OCI-LY7 (cell line): ENCODE measurements at regions of chr16 and their contacts with region 1.

Region 1: DNA sequence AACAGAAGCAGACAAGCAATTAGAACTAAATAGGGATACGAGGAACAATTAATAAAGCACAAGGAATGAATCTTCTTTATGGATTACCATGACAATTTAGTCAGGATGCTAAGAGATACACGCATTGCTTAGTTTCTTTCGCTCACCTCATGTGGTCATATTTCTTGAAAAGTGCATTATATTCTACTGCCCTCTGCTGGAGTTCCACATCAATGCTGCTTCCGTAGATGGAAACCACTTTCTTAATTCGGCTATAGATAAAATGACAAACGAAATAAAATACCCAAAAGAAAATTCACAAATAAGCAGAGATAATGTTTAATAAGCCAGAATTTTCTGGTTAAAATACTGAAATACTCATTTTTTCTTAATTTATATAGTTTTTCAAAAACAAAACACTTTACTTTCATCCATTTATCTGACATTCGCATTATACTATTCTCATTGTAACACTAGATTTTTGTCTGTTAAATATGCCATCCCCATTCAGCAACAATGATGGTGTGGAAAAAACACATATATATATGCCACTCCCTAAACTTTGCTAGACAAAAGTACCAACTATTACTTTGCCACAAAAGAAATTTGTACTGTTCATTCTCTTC is 22.0 kb upstream of the PHLPP2 start:
- DNase-seq: peak; percentile 64
- H3K4me3 ChIP-seq: no peak overlapping the region
- H3K27ac ChIP-seq: no peak overlapping the region
- H3K4me1 ChIP-seq: no peaks in the 10 kb centered on the region
- CTCF ChIP-seq: peak; percentile 96

Region 2: GRCh38 chr16:71564155-71564967 is 182.2 kb before region 1 on chr16:
- CTCF ChIA-PET with region 1: no interaction called
- POLR2A ChIA-PET with region 1: no interaction called
- intact Hi-C with region 1: loop called (anchors 2 kb)
- DNase-seq: no peak
- H3K4me3 ChIP-seq: peak overlapping the region; percentile 67
- H3K27ac ChIP-seq: peak overlapping the region; percentile 97
- H3K4me1 ChIP-seq: peaks cover 29% of the 10 kb centered on the region
- CTCF ChIP-seq: no peak

Region 3: GRCh38 chr16:71645453-71645852 is 101.1 kb before region 1 on chr16:
- CTCF ChIA-PET with region 1: no interaction called
- POLR2A ChIA-PET with region 1: no interaction called
- intact Hi-C with region 1: loop called (anchors 5 kb)
- DNase-seq: peak; percentile 52
- H3K4me3 ChIP-seq: no peak overlapping the region
- H3K27ac ChIP-seq: no peak overlapping the region
- H3K4me1 ChIP-seq: no peaks in the 10 kb centered on the region
- CTCF ChIP-seq: peak; percentile 82

Region 4: DNA sequence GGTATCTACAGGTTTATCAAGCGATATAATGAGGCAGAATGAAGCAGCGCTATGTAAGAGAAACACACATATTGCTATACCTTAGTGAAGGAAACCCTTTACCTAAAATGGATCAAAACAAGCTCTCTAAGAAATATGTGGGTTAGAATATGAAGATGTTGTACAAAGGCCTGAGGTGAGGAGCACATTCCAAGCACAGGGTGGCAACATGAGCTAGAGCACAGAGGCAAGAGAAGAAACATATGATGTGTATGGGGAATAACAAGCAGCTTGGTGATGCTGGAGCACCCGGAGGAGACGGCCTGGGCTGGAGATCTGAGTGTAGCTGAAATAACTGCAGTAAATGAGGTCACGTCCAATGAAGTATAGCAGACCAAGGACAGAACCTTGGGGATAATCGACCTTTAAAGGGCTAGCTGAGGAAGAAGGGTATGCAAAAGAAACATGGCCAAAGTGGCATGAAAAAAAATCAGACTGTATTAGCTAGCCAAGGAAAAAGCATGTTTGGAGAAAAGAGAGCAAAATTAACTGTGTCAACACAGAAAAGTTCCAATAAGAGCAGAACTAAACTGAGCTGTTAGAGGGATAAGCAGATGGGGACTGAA is 76.5 kb before region 1 on chr16:
- CTCF ChIA-PET with region 1: no interaction called
- POLR2A ChIA-PET with region 1: no interaction called
- intact Hi-C with region 1: loop called (anchors 5 kb)
- DNase-seq: no peak
- H3K4me3 ChIP-seq: no peak overlapping the region
- H3K27ac ChIP-seq: no peak overlapping the region
- H3K4me1 ChIP-seq: no peaks in the 10 kb centered on the region
- CTCF ChIP-seq: no peak

Region 5: DNA sequence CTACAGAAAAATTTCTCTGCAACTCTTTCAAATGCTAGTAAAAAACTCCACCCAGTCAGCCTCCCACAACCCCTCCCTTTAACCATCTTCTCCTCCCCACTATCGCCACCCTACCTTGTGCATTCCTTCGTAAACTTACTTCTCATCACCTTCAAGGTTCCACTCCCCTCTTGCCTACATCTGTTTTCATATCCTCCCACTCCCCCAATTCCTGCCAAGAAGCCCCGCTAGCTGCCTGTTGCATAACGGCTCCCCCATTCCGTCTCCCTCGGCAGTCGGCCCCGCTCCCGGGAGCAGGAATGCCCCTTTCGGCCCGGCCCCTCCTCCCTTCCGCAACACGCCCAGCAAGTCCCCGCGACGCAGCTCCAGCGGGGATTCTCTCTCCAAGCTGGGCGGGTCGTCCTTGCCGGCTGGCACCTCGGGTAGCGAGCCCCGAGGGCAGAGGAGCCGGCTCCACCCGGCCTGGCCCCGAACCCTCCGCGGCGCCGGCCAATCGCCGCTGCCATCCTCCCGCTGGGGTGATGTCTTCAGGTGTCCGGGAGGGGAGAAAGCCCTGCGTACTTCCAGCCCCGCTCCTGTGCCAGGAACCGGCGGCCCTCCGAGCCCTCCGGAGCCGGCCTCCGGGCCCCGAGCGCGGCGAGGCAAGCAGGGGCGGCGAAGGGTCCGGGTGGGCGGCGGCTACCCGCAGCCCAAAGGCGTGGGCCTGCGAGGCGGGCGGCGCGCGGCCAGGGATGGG is 23.6 kb before region 1 on chr16:
- CTCF ChIA-PET with region 1: no interaction called
- POLR2A ChIA-PET with region 1: no interaction called
- intact Hi-C with region 1: no loop called
- DNase-seq: peak; percentile 57
- H3K4me3 ChIP-seq: peak overlapping the region; percentile 94
- H3K27ac ChIP-seq: peak overlapping the region; percentile 66
- H3K4me1 ChIP-seq: peaks cover 45% of the 10 kb centered on the region
- CTCF ChIP-seq: no peak